Head of caudate nucleus (tissue), 42 donors: ENCODE measurements at regions of chr22 and their contacts with region 1.

Region 1: DNA sequence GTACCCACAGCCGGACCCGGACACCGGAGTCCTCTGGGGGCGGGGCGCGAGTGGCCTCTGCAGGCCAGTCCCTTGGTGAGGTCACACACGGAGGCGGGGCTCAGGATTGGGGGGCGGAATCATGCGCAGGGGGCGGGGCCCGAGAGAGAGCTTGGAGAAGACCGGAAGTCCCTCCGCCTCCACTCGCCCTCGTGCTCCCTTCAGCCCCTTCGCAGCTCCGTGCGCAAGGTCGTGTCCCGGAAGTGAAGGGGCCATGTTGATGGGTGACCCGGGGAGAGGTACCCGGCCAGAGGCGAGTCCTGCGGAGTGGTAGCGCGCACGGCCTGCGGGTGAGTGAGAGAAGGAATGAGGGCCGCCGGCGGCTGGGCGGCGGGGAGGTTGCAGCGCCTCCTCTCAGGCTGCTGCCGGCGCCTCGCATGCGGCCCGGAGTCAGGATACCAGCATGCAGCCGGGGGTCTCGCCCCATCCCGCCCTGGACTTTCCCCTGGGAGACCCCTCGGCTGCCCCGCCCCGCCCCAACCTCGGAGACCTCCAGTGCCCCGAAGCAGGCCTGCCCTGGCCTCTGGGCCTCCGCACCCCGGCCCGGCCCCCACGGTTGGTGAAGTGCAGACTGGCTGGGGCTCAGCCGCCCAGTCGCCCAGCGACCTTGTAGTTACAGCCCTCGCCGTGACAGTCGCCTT is at the start of gene MIEF1:
- DNase-seq: peak; percentile 94 to 99 (median 97)

Region 2: DNA sequence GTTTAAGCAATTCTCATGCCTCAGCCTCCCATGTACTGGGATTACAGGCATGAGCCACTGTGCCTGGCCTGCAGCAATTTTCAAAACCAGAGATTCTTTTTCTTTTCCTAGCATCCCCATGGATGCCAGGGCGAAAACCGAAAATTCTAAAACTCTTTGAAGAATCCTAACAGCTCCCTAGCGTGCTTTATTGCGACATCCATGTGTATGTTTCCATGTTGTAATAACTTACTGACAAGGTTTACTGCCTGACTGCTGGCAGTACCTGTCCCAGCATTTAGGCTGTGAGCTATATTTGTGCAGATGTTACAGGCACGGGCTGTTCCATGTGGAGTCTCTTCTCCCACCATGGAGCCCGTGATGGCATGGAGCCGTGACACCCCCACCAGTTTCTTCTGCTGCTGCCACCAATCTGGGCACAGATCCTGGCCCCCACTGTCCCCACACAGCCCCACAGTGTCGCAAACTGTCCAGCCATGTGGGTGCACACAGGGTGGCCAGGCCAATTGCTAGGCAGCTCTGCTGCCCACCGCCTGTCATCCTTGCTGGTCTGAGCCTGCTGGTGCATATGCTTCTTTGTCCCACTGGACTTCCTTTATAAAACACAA is 109.8 kb before region 1 on chr22:
- intact Hi-C with region 1: loop called (anchors 5 kb)
- DNase-seq: no peak

Region 3: DNA sequence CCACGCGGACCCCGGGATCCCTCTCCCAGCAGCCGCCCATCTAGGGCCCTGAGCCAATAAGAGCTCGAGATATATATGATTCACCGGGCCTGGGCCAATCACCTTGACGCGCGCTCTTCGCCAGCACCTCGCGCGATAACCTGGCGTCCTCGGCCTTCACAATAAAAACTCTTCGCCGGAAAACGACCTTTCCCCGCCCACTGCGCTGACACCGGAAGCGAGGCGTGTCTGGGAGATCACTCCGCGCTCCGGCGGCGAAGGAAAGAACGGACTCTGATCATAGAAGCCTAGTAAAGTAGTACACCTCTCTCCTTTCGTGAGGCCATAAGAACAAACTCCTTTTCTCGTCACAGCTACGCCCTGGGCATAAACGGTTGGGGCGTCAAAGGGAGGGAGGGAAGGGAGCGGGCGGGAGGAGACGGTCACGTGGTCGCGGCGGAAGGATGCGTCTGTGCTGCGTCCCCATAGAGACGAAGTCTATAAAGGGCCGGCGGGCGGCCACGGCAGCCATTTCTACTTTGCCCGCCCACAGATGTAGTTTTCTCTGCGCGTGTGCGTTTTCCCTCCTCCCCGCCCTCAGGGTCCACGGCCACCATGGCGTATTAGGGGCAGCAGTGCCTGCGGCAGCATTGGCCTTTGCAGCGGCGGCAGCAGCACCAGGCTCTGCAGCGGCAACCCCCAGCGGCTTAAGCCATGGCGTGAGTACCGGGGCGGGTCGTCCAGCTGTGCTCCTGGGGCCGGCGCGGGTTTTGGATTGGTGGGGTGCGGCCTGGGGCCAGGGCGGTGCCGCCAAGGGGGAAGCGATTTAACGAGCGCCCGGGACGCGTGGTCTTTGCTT is 18.0 kb after region 1 on chr22 and contains the start of gene ATF4:
- intact Hi-C with region 1: loop called (anchors 2 kb)
- DNase-seq: peak; percentile 87 to 98 (median 95)

Region 4: DNA sequence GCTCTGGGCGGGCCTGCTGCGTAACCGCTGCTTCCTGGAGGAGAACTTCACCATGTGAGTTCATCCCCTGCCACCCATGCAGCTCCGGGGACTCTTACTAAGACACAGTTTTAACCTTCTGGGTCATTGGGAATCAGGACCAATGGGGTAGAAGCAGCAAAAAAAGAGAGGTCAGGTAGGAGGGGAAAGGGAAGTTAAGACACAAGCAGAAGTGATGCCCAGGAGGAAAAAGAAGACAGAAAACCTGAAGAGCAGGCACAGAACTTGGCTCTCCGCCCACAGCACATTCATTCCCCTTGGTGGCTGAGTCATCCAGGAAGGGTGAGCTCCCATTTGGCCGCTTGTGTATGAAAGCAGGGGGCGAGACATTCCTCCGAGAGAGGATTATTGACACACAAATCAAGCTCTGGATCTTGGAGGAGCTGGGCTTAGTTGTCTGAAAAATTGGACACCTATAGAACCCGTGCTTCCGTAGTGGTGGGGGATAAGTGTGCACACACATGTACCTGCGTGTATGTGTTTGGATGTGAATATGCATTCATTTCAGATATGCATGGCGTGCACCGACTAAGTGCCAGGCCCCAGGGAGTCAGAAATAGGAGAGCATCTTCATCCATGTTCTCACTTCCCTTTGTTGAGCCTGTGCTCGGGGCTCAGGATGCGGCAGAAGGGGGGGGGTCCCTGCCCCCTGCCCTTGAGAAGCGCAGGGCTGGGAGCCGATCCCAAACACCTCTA is 132.6 kb after region 1 on chr22:
- intact Hi-C with region 1: no loop called
- DNase-seq: peak in 38 of 42 donors; percentile 29 to 85 (median 53)